Right ventricle myocardium inferior (tissue), 1 donor: ENCODE measurements at regions of chr6 and their contacts with region 1.

Region 1: DNA sequence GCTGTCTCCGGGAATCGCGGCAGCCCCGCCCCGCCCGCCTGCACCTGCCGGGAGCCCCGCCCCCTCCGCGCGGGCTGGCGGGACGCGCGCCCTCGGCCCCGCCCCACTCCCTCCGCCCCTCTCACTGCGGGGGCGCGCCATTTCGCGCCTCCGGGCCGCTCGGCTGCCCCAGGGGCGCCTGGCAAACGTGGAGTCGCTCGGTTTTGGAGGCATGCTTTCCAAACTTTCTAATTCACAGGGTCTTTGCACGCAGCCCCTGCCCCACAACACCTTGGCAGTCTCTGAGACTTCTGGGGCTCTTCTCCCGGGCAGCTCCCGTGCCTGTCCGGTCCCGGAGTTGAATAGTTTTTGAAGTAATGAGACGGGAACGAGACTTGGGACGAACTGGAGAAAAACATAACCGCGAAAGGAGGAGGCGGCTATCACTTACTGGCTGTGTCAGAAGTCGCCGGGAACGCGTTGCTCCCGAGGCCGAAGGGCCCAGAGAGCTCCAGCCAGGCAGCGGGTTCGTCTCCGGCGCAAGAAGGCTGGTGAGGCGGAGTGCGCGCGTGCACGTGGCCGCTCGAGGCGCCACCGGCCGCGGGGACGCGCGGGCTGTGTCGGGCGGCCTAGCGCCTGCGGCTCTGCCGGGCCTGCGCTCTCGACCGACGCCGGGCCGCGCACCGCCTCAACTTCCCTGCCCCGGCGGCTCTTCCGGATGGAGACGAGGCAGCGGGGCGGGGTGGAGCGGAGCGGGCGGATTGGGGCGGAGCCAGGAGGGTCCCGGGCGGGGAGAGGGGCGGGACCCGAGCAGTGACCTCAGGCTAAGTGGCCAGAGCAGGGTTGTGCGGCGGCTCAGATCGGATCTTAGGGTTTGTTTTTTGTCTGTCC is at the start of gene MCM9:
- DNase-seq: peak; percentile 95
- ATAC-seq: peak; percentile 98
- total RNA-seq, gene MCM9: 4.5 TPM

Region 2: GRCh38 chr6:118893807-118894424 is 40.8 kb before region 1 on chr6 and contains the start of gene ASF1A:
- intact Hi-C with region 1: loop called (anchors 2 kb)
- DNase-seq: peak; percentile 97
- ATAC-seq: peak; percentile 96
- total RNA-seq, gene ASF1A: 21.7 TPM